HEK293T (cell line): ENCODE measurements at regions of chr11 and their contacts with region 1.

Region 1: DNA sequence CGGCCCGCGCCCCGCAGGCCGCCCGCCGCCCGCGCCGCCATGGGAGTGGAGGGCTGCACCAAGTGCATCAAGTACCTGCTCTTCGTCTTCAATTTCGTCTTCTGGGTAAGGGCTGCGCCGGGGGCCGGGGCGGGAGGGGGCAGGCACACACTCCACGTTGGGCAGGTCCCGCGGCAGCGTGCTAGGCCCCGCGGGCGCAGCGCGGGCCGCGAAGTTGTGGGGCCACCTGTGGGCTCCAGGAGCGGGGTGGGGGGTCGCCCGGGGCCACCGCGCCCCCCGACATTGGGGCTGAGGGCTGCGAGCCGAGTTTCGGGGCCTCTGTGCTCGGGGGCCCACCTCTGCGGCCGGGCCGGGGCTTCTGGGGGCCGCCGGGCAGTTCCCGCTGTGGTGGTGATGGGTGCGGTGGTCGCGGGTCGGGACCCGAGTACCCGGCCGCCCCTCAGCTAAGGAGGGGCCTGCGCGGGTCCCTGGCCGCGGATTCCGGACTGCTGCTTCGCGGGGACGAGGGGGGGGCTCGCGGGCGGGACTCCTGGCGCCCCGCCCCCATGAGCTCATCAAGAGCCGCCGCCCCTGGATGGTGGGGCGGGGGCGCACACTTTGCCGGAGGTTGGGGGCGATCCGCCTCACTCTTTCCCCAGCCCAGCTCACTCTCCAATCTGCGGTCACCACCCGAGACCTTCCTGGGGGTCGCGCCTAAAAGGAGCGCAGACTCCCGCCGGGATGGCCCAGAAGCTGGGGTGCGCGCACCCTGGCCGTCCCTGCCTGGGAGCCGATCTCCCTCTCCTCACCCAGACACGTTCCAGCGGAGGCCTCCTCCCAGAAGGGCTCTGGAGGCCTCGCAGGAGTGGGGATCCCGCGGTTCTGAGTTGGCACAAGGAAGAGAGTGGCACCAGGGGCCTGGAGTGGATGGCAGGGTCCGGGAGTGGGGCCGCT is 667 bp downstream of the CD81 start:
- DNase-seq: peak; percentile 71

Region 2: GRCh38 chr11:2305140-2305840 is 72.5 kb before region 1 on chr11:
- CTCF ChIA-PET with region 1: interaction called, 6 read pairs
- POLR2A ChIA-PET with region 1: interaction called, 11 read pairs
- DNase-seq: peak; percentile 81

Region 3: DNA sequence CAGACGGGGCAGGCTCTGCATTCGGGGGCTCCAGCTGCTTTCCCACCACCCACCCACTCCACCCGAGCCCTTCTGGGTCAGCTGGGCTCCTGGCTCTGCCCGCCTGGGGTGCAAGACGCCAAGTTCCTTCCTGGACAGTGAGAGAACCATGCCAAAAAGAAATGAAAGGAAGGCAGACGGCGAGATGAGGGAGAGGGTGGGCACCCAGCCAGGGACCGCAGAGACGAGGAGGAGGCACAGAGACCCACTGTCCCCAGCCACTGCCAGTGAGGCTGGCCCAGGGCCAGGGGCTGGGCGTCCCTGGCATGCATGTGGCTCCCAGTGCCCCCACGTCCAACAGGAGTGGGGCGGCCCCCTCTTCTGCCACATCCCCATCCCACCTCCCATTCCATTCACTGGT is 11.5 kb before region 1 on chr11:
- CTCF ChIA-PET with region 1: interaction called, 4 read pairs
- POLR2A ChIA-PET with region 1: interaction called, 13 read pairs
- DNase-seq: no peak

Region 4: DNA sequence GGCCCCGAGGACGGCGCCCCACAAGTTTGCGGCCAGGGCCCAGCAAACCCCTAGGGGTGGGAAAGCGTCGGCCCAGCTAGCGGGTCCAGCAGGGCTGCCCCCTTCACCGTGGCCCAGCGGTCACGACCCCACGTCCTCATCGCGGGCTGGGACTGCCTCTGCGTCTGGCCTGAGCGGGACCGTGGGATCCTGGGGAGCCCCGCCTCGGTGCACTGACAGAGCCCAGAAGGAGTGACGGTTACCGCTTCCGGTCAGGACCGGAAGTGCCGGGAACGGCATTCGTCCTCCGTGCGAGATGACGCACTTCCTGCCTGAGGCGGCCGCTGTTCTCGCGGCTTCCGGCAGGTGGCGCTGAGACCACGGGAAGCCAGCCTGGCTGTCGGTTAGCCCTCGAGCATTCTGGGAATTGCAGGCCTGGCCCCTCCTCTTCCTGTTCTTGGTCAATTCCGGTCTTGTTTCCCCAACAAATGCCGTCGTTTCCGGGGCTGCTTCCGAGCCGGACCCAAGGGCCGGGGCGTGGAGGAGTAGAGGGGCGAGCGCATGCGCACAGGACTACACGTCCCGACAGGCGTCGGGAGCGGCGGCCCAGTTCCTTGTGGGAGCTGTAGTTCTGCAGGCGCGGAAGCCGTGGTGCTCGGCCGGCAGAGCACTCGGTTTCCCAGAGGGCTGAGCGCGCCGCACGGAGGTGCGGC is 22.4 kb after region 1 on chr11 and contains the start of gene TSSC4:
- CTCF ChIA-PET with region 1: no interaction called
- POLR2A ChIA-PET with region 1: interaction called, 11 read pairs
- DNase-seq: peak; percentile 97

Region 5: DNA sequence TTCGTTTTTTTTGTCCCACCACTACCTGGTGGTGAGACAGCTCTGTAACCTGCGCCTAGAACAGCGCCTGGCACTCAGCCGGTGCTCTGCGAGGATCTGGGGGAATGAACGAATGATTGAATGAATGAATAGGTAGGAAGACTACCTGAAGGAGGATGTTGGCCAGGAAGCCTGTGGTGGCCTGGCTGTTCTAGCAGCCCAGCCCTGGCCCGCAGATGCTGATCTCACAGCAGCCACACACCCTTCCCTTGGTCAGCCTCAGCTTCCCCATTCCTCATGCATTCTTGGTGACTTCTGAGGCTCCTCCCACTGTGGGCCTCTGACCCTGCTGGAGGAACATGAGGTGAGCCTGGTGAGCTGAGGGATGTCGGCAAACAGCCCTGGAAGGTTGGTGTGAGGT is 62.9 kb after region 1 on chr11:
- CTCF ChIA-PET with region 1: no interaction called
- POLR2A ChIA-PET with region 1: no interaction called
- DNase-seq: no peak

Region 6: DNA sequence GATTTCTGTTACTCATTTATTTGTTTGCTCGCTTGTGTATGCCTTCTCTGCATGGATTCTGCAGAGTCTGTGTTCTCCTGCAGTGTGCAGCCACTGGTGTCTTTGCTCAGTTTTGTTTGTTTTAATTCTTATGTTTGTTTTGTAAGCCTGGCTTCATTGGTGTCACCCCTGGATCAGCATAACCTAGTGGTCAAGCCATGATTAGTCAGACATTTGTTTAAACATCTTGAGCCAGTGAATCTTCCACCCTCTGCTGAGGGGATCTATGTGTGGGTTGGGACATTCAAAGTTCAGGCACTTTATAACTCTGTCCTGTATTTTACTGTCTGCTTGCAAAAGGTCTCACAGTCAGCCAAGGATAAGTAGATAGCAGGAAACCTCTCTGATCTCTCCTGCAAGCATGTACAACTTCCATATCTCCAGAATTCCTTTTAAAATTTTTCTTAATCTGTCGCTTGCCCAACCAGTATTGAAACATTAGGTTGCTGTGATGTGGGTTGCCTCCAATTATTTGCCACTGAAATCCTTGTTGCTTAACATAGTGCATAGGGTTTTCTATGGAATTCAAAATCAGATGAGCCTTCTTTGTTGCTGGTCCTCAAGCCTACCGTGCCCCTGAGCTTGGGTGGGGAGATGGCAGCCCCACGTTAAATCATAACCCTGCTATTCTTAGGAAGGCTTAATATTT is 235.3 kb after region 1 on chr11:
- CTCF ChIA-PET with region 1: no interaction called
- POLR2A ChIA-PET with region 1: no interaction called
- DNase-seq: no peak